ENCODE measurements at regions of chr11 and their contacts with region 1.

Region 1: GRCh38 chr11:86919557-86920210 is 35.5 kb downstream of the FZD4 start:
- DNase-seq: peak; percentile 48 to 69 (median 66)
- H3K4me3 ChIP-seq: no peak overlapping the region
- H3K27ac ChIP-seq: no peak overlapping the region
- H3K4me1 ChIP-seq: peaks cover 0 to 4% (median 2%) of the 10 kb centered on the region in 4 experiments
- H3K27me3 ChIP-seq: no peaks in the 10 kb centered on the region

Region 2: GRCh38 chr11:86933891-86934581 is 14.4 kb after region 1 on chr11:
- CTCF ChIA-PET with region 1: interaction called, 10 read pairs
- POLR2A ChIA-PET with region 1: no interaction called
- DNase-seq: no peak
- H3K4me3 ChIP-seq: no peak overlapping the region
- H3K27ac ChIP-seq: no peak overlapping the region
- H3K4me1 ChIP-seq: peaks cover 0 to 7% (median 5%) of the 10 kb centered on the region in 4 experiments
- H3K27me3 ChIP-seq: no peaks in the 10 kb centered on the region

Region 3: GRCh38 chr11:87081358-87081757 is 161.7 kb after region 1 on chr11:
- CTCF ChIA-PET with region 1: no interaction called
- POLR2A ChIA-PET with region 1: no interaction called
- DNase-seq: peak; percentile 25 to 43 (median 39)
- H3K4me3 ChIP-seq: peak overlapping the region in 5 of 7 experiments; percentile 53 to 82 (median 58)
- H3K27ac ChIP-seq: peak overlapping the region; percentile 52 to 60
- H3K4me1 ChIP-seq: peaks cover 0 to 6% (median under 1%) of the 10 kb centered on the region in 4 experiments
- H3K27me3 ChIP-seq: no peaks in the 10 kb centered on the region